ENCODE measurements at regions of chr20 and their contacts with region 1.

Region 1: GRCh38 chr20:44310664-44311639 is at the start of gene FITM2:
- DNase-seq: peak; percentile 98
- H3K4me3 Mint-ChIP-seq: peak within 1 kb of the TSS; percentile 87
- H3K27ac Mint-ChIP-seq: peak within 1 kb of the TSS; percentile 76
- H3K4me1 Mint-ChIP-seq: peaks cover 18% of the 10 kb centered on the region
- H3K27me3 Mint-ChIP-seq: no peaks in the 10 kb centered on the region
- total RNA-seq, gene FITM2: 1.8 to 1.9 TPM

Region 2: GRCh38 chr20:44057698-44058675 is 253.0 kb before region 1 on chr20:
- CTCF ChIA-PET with region 1: no interaction called
- POLR2A ChIA-PET with region 1: no interaction called
- intact Hi-C with region 1: no loop called
- DNase-seq: no peak
- H3K4me3 Mint-ChIP-seq: no peak overlapping the region
- H3K27ac Mint-ChIP-seq: no peak overlapping the region
- H3K4me1 Mint-ChIP-seq: peaks cover 7% of the 10 kb centered on the region
- H3K27me3 Mint-ChIP-seq: no peaks in the 10 kb centered on the region

Region 3: DNA sequence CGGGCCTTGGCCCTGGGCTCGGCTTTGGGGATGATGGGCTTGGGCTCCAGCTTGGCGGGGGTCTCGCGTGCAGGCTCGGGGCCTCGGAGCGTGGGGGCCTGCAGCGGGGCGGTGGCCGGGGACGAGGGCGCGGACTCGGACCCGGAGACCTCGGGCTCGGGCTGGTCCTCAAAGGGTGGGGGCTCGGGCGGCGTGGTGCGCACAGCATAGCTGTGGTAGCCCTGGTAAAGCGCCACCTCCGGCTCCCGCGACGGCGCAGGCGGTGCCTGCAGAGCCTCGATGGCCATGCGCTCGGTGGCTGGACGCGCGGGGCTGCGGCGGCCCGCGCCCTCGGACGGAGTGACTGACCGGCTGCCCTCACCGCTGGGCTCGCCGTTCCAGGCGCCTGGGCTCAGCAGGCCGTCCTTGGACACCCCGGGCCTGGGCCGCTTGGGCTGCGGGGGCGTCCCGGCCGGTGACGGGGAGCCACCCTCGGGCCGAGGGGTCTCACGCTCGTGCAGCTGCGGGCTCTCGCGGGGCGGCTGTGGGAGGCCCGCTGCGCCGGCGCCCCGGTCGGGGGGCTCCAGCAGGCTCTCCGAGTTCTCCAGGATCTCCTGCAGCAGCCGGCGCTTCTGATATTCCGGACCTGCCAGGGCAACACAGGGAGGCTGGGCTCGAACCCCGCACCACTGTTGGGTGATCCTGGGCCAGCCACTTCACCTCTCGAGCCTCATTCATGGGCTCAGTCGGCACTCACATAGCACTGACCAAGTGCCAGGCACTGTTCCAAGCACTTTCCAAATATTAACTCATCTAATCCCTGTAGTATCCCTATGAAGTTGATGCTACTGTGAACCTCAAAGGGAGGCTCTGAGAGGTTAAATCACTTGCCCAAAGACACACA is 194.9 kb before region 1 on chr20:
- CTCF ChIA-PET with region 1: interaction called, 16 read pairs
- POLR2A ChIA-PET with region 1: no interaction called
- intact Hi-C with region 1: loop called (anchors 2 kb)
- DNase-seq: no peak
- H3K4me3 Mint-ChIP-seq: no peak overlapping the region
- H3K27ac Mint-ChIP-seq: no peak overlapping the region
- H3K4me1 Mint-ChIP-seq: peaks cover 4% of the 10 kb centered on the region
- H3K27me3 Mint-ChIP-seq: peaks cover 31% of the 10 kb centered on the region

Region 4: DNA sequence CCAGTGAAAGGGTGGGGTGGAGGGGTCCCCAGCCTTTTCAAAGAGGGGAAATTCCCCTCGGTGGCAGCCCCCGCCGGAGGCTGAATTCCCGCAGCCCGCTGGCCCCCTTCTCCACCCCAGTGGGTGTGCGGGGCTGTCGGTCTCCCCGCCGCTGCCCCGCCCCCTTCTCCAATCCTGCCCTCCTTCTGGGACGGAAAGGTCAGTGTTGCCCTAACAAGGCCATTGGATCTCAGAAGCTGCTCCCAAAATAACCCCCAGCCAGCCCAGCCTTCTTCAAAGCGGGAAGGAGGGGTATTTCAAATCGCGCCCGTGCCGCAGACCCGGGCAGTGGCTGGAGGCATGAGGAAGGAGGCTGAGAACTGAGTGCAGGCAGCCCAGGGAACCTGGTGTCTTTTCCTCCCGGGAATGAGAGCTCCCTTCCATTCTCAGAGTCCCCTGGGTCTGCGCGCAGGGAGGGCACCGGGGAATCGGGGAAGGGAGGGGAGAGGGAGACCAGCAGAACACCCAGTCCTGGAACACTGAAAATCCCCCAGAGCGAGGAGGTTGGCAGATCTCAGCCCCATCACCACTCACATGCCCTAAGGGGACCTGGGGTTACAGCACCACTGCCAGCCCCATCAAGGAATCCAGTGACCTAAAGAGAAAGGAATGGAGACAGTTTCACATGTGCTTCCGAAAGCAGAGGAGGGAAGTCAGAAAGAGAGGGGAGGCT is 123.7 kb before region 1 on chr20 and contains the start of gene JPH2:
- CTCF ChIA-PET with region 1: interaction called, 17 read pairs
- POLR2A ChIA-PET with region 1: no interaction called
- intact Hi-C with region 1: no loop called
- DNase-seq: no peak
- H3K4me3 Mint-ChIP-seq: no peak within 1 kb of the TSS
- H3K27ac Mint-ChIP-seq: no peak within 1 kb of the TSS
- H3K4me1 Mint-ChIP-seq: peaks cover 6% of the 10 kb centered on the region
- H3K27me3 Mint-ChIP-seq: peaks cover 48% of the 10 kb centered on the region
- total RNA-seq, gene JPH2: not detected

Region 5: DNA sequence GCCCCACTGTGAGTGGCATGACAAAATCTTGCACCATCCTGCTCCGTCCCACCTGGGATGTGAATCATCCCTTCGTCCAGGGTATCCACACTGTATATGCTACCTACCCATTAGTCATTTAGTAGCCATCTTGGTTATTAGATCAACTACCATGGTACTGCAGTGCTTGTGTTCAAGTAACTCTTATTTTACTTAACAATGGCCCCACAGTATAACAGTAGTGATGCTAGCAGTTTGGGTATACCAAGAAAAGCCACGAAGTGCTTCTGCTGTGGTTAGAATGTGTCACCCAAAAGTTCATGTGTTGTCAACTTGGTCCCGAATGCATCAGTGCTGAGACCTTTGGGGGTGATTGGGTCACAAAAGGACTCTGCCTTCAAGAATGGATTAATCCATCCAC is 112.1 kb before region 1 on chr20:
- CTCF ChIA-PET with region 1: no interaction called
- POLR2A ChIA-PET with region 1: no interaction called
- intact Hi-C with region 1: no loop called
- DNase-seq: peak; percentile 54
- H3K4me3 Mint-ChIP-seq: no peak overlapping the region
- H3K27ac Mint-ChIP-seq: peak overlapping the region; percentile 79
- H3K4me1 Mint-ChIP-seq: peaks cover 32% of the 10 kb centered on the region
- H3K27me3 Mint-ChIP-seq: no peaks in the 10 kb centered on the region

Region 6: DNA sequence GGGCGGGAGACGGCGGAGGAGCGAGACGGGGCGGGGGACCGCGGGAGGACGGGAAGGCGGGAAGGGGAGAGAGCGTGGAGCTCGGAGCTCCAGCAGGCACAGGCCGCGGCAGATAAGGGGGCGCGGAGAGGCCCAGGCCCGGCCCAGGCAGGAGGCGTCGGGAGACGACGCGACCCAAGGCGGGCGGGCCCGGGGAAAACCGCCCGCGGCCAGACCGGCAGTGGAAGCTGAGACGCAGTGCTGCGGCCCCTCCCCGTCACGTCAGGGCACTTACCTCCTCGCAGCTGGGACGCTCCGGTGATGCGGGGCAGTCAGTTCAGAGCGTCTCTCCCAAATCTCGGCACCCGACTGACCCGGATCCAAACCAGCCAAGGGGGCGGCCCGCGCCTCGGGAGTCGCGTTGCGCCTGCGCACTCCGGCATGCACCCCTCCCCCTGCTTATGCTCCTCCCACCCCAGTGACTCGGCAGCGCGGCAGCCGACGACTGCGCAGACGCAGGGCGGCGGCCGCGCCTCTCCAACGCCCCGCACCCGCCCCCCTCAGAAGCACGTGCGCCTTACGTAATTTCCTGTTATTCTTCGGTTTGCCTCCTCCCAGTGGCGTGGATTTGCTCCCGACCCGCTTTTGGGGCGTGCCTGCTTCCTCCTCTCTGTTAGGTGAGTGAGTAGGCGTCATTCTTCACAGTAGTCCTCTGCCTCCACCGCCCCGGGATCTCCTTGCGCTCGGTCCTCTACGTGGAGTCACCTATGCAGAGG is 100.4 kb before region 1 on chr20 and contains the start of gene OSER1:
- CTCF ChIA-PET with region 1: interaction called, 453 read pairs
- POLR2A ChIA-PET with region 1: interaction called, 6 read pairs
- intact Hi-C with region 1: no loop called
- DNase-seq: peak; percentile 99
- H3K4me3 Mint-ChIP-seq: peak within 1 kb of the TSS; percentile 98
- H3K27ac Mint-ChIP-seq: peak within 1 kb of the TSS; percentile 93
- H3K4me1 Mint-ChIP-seq: peaks cover 61% of the 10 kb centered on the region
- H3K27me3 Mint-ChIP-seq: peaks cover 1% of the 10 kb centered on the region
- total RNA-seq, gene OSER1: 23.4 to 24.2 TPM

Region 7: GRCh38 chr20:44222633-44223368 is 88.2 kb before region 1 on chr20:
- CTCF ChIA-PET with region 1: interaction called, 453 read pairs
- POLR2A ChIA-PET with region 1: interaction called, 21 read pairs
- intact Hi-C with region 1: no loop called
- DNase-seq: no peak
- H3K4me3 Mint-ChIP-seq: no peak overlapping the region
- H3K27ac Mint-ChIP-seq: no peak overlapping the region
- H3K4me1 Mint-ChIP-seq: peaks cover 24% of the 10 kb centered on the region
- H3K27me3 Mint-ChIP-seq: no peaks in the 10 kb centered on the region

Region 8: GRCh38 chr20:44326391-44327159 is 15.6 kb after region 1 on chr20:
- CTCF ChIA-PET with region 1: interaction called, 14 read pairs
- POLR2A ChIA-PET with region 1: interaction called, 3 read pairs
- intact Hi-C with region 1: no loop called
- DNase-seq: peak; percentile 37
- H3K4me3 Mint-ChIP-seq: no peak overlapping the region
- H3K27ac Mint-ChIP-seq: no peak overlapping the region
- H3K4me1 Mint-ChIP-seq: no peaks in the 10 kb centered on the region
- H3K27me3 Mint-ChIP-seq: peaks cover 5% of the 10 kb centered on the region

Region 9: DNA sequence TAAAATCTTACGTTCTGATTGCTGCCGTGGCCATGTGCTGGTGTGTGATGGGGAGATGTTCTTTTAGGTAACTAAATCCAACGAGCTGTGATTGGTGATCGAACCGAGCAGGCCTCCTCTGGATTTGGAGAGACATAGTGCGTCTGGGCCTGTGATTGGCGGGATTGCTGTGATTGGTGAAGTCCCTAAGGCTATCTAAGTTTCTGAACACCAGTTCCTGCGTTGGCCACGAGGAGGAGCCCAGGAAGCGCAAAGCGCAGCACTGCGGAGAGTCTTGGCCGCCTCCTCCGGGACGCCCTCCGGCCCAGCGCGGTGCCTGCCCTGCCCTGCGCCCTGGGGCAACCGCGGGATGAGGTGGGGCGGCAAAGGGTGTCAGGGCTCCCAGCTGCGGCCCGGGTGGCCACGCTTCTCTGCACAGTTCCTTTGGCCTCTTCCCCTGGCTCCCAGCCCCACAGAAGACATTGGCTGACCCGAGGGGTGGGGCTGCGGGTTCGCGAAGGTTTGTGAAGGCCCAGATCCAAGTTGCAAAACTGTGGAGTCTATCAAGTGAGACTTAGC is 77.6 kb after region 1 on chr20:
- CTCF ChIA-PET with region 1: interaction called, 6 read pairs
- POLR2A ChIA-PET with region 1: no interaction called
- intact Hi-C with region 1: loop called (anchors 5 kb)
- DNase-seq: peak; percentile 84
- H3K4me3 Mint-ChIP-seq: no peak overlapping the region
- H3K27ac Mint-ChIP-seq: no peak overlapping the region
- H3K4me1 Mint-ChIP-seq: peaks cover 2% of the 10 kb centered on the region
- H3K27me3 Mint-ChIP-seq: peaks cover 14% of the 10 kb centered on the region

Region 10: DNA sequence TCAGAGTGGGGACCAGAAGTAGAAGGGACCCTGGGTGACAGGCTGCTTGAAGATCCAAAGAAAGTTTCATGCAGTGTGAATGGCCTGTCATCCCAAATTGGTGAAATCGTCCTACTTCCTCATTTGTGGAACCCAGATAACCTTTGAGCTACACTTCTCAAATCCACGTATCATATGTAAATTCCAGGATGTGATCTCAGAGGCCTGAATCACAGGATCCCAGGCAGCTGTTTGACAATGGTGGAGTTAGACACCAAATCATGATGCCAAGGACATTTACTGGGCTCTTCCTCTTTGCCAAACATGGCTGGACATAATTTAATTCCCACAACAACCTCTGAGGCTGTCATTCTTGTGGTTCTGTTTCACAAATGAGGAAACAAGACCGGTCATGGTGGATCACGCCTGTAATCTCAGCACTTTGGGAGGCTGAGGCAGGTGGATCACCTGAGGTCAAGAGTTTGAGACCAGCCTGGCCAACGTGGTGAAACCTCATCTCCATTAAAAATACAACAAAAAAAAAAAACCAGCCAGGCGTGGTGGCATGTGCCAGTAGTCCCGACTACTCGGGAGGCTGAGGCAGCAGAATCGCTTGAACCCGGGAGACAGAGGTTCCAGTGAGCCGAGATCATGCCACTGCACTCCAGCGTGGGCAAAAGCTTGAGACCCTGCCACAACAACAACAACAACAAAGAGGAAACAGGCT is 124.8 kb after region 1 on chr20:
- CTCF ChIA-PET with region 1: no interaction called
- POLR2A ChIA-PET with region 1: no interaction called
- intact Hi-C with region 1: no loop called
- DNase-seq: no peak
- H3K4me3 Mint-ChIP-seq: no peak overlapping the region
- H3K27ac Mint-ChIP-seq: no peak overlapping the region
- H3K4me1 Mint-ChIP-seq: no peaks in the 10 kb centered on the region
- H3K27me3 Mint-ChIP-seq: peaks cover 4% of the 10 kb centered on the region

Measured in activated CD4-positive, alpha-beta memory T cell treated with anti-CD3 and anti-CD28 coated beads for 36 hours (primary cell).